ENCODE measurements at regions of chrX and their contacts with region 1.

Region 1: DNA sequence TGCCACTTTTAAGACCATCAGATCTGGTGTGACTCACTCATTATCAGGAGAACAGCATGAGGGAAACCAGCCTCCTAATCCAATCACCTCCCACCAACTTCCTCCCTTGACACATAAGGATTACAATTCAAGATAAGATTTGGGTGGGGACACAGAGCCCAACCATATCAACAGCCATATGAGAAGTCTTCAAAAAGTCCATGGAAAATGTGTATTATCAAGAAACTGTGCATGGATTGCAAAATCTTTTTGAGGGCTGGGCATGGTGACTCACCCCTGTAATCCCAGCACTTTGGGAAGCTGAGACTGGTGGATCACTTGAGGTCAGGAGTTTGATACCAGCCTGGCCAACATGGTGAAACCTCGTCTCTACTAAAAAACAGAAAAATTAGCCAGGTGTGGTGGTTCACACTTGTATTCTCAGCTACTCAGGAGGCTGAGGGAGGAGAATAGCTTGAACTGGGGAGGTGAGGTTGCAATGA is 17.8 kb upstream of the RPL39 start:
- DNase-seq: no peak
- H3K4me3 ChIP-seq: no peak overlapping the region
- H3K27ac ChIP-seq: no peak overlapping the region
- H3K4me1 ChIP-seq: no peaks in the 10 kb centered on the region
- H3K27me3 ChIP-seq: no peaks in the 10 kb centered on the region
- CTCF ChIP-seq: no peak

Region 2: GRCh38 chrX:119529345-119530276 is 279.6 kb before region 1 on chrX:
- CTCF ChIA-PET with region 1: no interaction called
- dilution Hi-C with region 1: no loop called
- in situ Hi-C with region 1: no loop called
- intact Hi-C with region 1: no loop called
- DNase-seq: no peak
- H3K4me3 ChIP-seq: no peak overlapping the region
- H3K27ac ChIP-seq: no peak overlapping the region
- H3K4me1 ChIP-seq: no peaks in the 10 kb centered on the region
- H3K27me3 ChIP-seq: no peaks in the 10 kb centered on the region
- CTCF ChIP-seq: no peak

Region 3: GRCh38 chrX:119753571-119754257 is 55.5 kb before region 1 on chrX:
- CTCF ChIA-PET with region 1: no interaction called
- dilution Hi-C with region 1: loop called (anchors 5 kb)
- in situ Hi-C with region 1: no loop called
- intact Hi-C with region 1: no loop called
- DNase-seq: no peak
- H3K4me3 ChIP-seq: no peak overlapping the region
- H3K27ac ChIP-seq: no peak overlapping the region
- H3K4me1 ChIP-seq: peaks cover 3% of the 10 kb centered on the region
- H3K27me3 ChIP-seq: no peaks in the 10 kb centered on the region
- CTCF ChIP-seq: peak in 1 of 2 donors; percentile 51

Region 4: DNA sequence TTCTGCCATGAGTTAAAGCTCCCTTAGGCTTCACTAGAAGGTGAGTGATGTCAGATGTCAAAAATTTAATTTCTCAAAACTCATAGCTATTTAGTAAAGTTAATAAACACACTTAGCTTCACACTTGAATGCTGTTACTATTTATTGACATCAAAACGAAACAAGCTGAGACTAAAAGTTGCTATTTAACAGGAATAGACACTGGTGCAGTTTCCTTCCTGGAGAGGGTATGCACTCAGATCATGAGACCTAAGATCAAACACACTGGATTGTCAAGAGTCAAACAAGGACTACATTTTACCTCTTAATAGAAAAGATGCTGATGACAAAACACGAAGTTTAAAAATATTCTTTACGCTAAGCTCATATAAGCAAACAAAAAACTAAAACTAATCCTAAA is 24.7 kb after region 1 on chrX:
- CTCF ChIA-PET with region 1: interaction called, 23 read pairs
- dilution Hi-C with region 1: no loop called
- in situ Hi-C with region 1: no loop called
- intact Hi-C with region 1: no loop called
- DNase-seq: no peak
- H3K4me3 ChIP-seq: no peak overlapping the region
- H3K27ac ChIP-seq: no peak overlapping the region
- H3K4me1 ChIP-seq: no peaks in the 10 kb centered on the region
- H3K27me3 ChIP-seq: no peaks in the 10 kb centered on the region
- CTCF ChIP-seq: no peak